Activated naive CD4-positive, alpha-beta T cell treated with anti-CD3 and anti-CD28 coated beads for 36 hours (primary cell): ENCODE measurements at regions of chr6 and their contacts with region 1.

Region 1: DNA sequence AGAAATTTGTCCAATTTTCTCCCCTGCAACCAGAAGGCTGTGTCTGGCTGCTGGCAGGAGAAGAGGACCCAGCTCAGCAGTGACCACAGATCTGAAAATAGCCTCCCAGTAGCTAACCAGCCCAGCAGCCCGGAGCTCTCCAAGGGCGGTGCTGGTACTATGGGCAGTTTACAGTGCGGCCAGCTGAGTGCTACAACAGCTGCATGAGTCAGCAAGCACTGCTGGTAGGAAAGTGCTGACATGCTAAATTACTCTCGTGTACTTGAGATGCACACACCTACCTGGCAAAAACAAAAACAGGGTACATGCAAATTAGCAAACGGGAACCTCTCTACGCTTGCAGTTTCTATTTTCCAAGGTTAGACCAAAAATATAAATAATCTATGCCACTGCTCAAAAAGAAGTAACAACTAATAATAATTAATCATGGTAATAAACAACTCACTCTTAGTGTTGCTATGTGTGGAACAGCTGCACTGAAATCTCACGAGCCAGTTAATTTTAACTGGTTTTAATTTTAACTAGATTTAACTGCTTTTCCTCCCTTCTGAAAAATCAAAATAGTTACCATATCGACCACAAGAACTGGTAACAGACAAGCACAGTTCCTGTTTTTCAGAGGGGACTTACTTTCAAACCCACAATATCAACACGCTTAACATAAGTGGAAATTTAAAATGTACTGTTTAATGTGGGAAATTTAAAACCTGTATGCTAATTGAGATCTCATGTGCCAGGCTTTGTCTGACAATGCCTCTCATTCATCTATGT is 10.8 kb downstream of the BACH2 start:
- DNase-seq: peak; percentile 68
- H3K4me3 Mint-ChIP-seq: peak overlapping the region; percentile 70
- H3K27ac Mint-ChIP-seq: peak overlapping the region; percentile 94
- H3K4me1 Mint-ChIP-seq: peaks cover 94% of the 10 kb centered on the region
- H3K27me3 Mint-ChIP-seq: no peaks in the 10 kb centered on the region

Region 2: GRCh38 chr6:89940225-89941027 is 345.4 kb before region 1 on chr6:
- CTCF ChIA-PET with region 1: interaction called, 9 read pairs
- intact Hi-C with region 1: loop called (anchors 1 kb)
- DNase-seq: peak; percentile 86
- H3K4me3 Mint-ChIP-seq: no peak overlapping the region
- H3K27ac Mint-ChIP-seq: peak overlapping the region; percentile 74
- H3K4me1 Mint-ChIP-seq: peaks cover 70% of the 10 kb centered on the region
- H3K27me3 Mint-ChIP-seq: no peaks in the 10 kb centered on the region

Region 3: GRCh38 chr6:90216072-90216977 is 69.5 kb before region 1 on chr6:
- CTCF ChIA-PET with region 1: interaction called, 7 read pairs
- intact Hi-C with region 1: loop called (anchors 2 kb)
- DNase-seq: peak; percentile 76
- H3K4me3 Mint-ChIP-seq: peak overlapping the region; percentile 14
- H3K27ac Mint-ChIP-seq: no peak overlapping the region
- H3K4me1 Mint-ChIP-seq: peaks cover 32% of the 10 kb centered on the region
- H3K27me3 Mint-ChIP-seq: no peaks in the 10 kb centered on the region

Region 4: DNA sequence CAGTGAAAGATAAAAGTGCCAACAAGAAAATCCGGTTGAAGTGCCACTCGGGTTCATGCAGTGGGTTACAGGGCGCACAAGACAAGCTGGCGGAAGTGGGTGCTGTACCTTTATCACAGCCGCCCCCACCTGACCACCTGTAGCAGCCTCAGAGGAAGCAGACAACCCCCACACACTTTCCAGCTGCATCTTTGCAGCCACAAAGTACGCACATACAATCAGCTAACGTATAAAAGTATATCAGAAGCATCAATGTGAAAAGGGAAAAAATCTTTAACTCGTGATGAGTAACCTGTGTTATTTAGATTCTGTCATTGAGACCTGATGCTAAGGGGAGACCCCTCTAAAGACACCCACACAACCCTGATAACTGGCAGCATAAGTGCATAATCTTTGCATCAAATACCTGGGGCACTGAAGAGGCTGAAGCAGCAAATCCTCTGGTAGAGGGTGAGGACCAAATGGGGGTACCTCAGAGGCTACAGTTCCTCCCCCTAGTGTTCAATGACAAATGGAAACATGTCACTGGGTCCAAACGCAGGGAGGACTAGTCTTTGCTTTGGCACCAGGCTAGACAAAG is 11.3 kb before region 1 on chr6:
- CTCF ChIA-PET with region 1: interaction called, 28 read pairs
- intact Hi-C with region 1: loop called (anchors 1 kb)
- DNase-seq: peak; percentile 96
- H3K4me3 Mint-ChIP-seq: peak overlapping the region; percentile 36
- H3K27ac Mint-ChIP-seq: peak overlapping the region; percentile 97
- H3K4me1 Mint-ChIP-seq: peaks cover 91% of the 10 kb centered on the region
- H3K27me3 Mint-ChIP-seq: no peaks in the 10 kb centered on the region

Region 5: GRCh38 chr6:90413867-90414266 is 128.1 kb after region 1 on chr6:
- CTCF ChIA-PET with region 1: interaction called, 6 read pairs
- intact Hi-C with region 1: loop called (anchors 1 kb)
- DNase-seq: peak; percentile 96
- H3K4me3 Mint-ChIP-seq: peak overlapping the region; percentile 71
- H3K27ac Mint-ChIP-seq: peak overlapping the region; percentile 94
- H3K4me1 Mint-ChIP-seq: peaks cover 69% of the 10 kb centered on the region
- H3K27me3 Mint-ChIP-seq: no peaks in the 10 kb centered on the region

Region 6: GRCh38 chr6:90472744-90473143 is 186.9 kb after region 1 on chr6:
- CTCF ChIA-PET with region 1: interaction called, 176 read pairs
- intact Hi-C with region 1: loop called (anchors 1 kb)
- DNase-seq: peak; percentile 61
- H3K4me3 Mint-ChIP-seq: peak overlapping the region; percentile 48
- H3K27ac Mint-ChIP-seq: peak overlapping the region; percentile 92
- H3K4me1 Mint-ChIP-seq: peaks cover 86% of the 10 kb centered on the region
- H3K27me3 Mint-ChIP-seq: no peaks in the 10 kb centered on the region

Region 7: GRCh38 chr6:90860822-90861601 is 575.2 kb after region 1 on chr6:
- CTCF ChIA-PET with region 1: no interaction called
- intact Hi-C with region 1: loop called (anchors 5 kb)
- DNase-seq: no peak
- H3K4me3 Mint-ChIP-seq: no peak overlapping the region
- H3K27ac Mint-ChIP-seq: no peak overlapping the region
- H3K4me1 Mint-ChIP-seq: no peaks in the 10 kb centered on the region
- H3K27me3 Mint-ChIP-seq: peaks cover 5% of the 10 kb centered on the region